ENCODE measurements at regions of chr12 and their contacts with region 1.

Region 1: GRCh38 chr12:128259556-128260070 is 7.4 kb upstream of the TMEM132C start:
- DNase-seq: peak; percentile 65
- H3K4me3 ChIP-seq: no peak overlapping the region
- H3K27ac ChIP-seq: no peak overlapping the region
- H3K4me1 ChIP-seq: no peaks in the 10 kb centered on the region
- H3K27me3 ChIP-seq: peaks cover 6% of the 10 kb centered on the region
- CTCF ChIP-seq: peak; percentile 82

Region 2: GRCh38 chr12:127363392-127363791 is 896.2 kb before region 1 on chr12:
- CTCF ChIA-PET with region 1: no interaction called
- POLR2A ChIA-PET with region 1: no interaction called
- intact Hi-C with region 1: no loop called
- DNase-seq: peak; percentile 74
- H3K4me3 ChIP-seq: no peak overlapping the region
- H3K27ac ChIP-seq: no peak overlapping the region
- H3K4me1 ChIP-seq: no peaks in the 10 kb centered on the region
- H3K27me3 ChIP-seq: no peaks in the 10 kb centered on the region
- CTCF ChIP-seq: peak; percentile 67

Region 3: GRCh38 chr12:127677537-127678131 is 582.0 kb before region 1 on chr12:
- CTCF ChIA-PET with region 1: no interaction called
- POLR2A ChIA-PET with region 1: no interaction called
- intact Hi-C with region 1: no loop called
- DNase-seq: peak; percentile 83
- H3K4me3 ChIP-seq: no peak overlapping the region
- H3K27ac ChIP-seq: no peak overlapping the region
- H3K4me1 ChIP-seq: no peaks in the 10 kb centered on the region
- H3K27me3 ChIP-seq: no peaks in the 10 kb centered on the region
- CTCF ChIP-seq: peak; percentile 91

Region 4: DNA sequence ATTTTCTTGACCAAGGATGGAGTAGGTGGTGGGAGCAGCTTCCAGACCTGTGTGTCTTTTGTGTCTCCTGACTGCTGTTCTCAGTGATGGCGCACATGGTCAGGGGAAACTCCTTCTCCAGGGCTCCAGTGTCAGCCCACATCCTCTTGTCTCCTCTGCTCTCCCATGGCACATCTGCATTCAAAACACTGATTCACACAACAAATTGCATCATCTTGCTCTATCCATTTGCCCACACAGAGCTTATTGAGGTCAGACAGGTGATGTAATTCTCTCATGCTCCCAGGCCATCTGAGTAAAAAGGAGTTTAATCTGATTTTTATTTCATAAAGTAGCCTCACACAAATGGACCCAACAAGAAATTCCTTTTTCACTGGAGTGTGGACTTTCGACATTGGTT is 14.5 kb before region 1 on chr12:
- CTCF ChIA-PET with region 1: interaction called, 12 read pairs
- POLR2A ChIA-PET with region 1: no interaction called
- intact Hi-C with region 1: no loop called
- DNase-seq: no peak
- H3K4me3 ChIP-seq: no peak overlapping the region
- H3K27ac ChIP-seq: no peak overlapping the region
- H3K4me1 ChIP-seq: no peaks in the 10 kb centered on the region
- H3K27me3 ChIP-seq: no peaks in the 10 kb centered on the region
- CTCF ChIP-seq: no peak

Region 5: DNA sequence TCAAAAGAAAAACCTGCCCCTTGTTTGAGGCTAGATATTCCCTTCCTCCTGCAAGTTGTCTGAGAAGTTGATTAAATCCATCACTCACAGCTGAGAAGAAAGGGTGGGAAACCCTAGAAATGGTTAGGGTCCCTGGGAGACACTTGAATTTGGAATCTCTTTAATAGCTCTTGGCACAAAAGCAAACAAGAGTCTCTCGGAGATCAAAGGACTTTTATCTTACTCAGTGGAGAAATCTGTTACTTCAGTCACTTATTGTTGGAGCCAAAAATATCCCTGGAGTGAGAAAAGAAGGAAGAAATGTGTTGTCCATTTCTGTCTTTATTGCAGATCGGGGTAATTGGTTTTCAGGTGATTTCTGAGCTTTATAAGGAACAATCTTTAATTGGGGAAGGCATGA is 54.3 kb after region 1 on chr12:
- CTCF ChIA-PET with region 1: no interaction called
- POLR2A ChIA-PET with region 1: no interaction called
- intact Hi-C with region 1: no loop called
- DNase-seq: no peak
- H3K4me3 ChIP-seq: no peak overlapping the region
- H3K27ac ChIP-seq: no peak overlapping the region
- H3K4me1 ChIP-seq: no peaks in the 10 kb centered on the region
- H3K27me3 ChIP-seq: peaks cover 3% of the 10 kb centered on the region
- CTCF ChIP-seq: no peak

Region 6: GRCh38 chr12:128537668-128538067 is 278.1 kb after region 1 on chr12:
- CTCF ChIA-PET with region 1: interaction called, 15 read pairs
- POLR2A ChIA-PET with region 1: no interaction called
- intact Hi-C with region 1: no loop called
- DNase-seq: no peak
- H3K4me3 ChIP-seq: no peak overlapping the region
- H3K27ac ChIP-seq: no peak overlapping the region
- H3K4me1 ChIP-seq: no peaks in the 10 kb centered on the region
- H3K27me3 ChIP-seq: peaks cover 15% of the 10 kb centered on the region
- CTCF ChIP-seq: no peak

Region 7: DNA sequence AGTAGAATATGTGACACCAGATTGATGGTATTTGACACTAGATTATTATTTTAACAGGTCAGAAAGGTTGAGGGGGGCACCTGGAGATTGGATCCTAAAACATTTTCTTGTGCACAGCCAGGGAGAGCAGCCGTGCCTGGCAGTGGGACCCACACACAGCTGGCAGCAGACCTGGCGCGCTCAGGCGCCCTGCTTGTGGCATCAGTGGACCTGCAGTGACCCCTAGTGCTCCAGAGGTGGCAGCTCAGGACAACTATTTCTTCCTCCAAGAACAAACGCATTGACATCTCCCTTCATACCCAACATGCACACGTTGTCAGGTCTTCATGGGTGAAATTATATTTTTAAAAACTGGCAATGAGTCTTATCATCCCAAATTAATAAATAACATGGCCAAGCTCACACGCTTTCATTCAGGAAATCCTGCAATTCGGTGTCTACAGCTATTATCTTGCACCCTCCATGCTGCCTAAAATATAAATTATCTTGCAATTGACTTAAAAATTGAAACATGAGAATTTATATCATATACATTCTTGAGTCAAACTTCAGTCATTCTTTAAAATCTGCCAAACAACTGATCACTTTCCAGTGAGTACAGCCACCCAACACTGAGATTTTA is 1651.9 kb after region 1 on chr12:
- CTCF ChIA-PET with region 1: interaction called, 4 read pairs
- POLR2A ChIA-PET with region 1: no interaction called
- intact Hi-C with region 1: loop called (anchors 2 kb)
- DNase-seq: peak; percentile 45
- H3K4me3 ChIP-seq: no peak overlapping the region
- H3K27ac ChIP-seq: no peak overlapping the region
- H3K4me1 ChIP-seq: no peaks in the 10 kb centered on the region
- H3K27me3 ChIP-seq: no peaks in the 10 kb centered on the region
- CTCF ChIP-seq: peak; percentile 59

Region 8: DNA sequence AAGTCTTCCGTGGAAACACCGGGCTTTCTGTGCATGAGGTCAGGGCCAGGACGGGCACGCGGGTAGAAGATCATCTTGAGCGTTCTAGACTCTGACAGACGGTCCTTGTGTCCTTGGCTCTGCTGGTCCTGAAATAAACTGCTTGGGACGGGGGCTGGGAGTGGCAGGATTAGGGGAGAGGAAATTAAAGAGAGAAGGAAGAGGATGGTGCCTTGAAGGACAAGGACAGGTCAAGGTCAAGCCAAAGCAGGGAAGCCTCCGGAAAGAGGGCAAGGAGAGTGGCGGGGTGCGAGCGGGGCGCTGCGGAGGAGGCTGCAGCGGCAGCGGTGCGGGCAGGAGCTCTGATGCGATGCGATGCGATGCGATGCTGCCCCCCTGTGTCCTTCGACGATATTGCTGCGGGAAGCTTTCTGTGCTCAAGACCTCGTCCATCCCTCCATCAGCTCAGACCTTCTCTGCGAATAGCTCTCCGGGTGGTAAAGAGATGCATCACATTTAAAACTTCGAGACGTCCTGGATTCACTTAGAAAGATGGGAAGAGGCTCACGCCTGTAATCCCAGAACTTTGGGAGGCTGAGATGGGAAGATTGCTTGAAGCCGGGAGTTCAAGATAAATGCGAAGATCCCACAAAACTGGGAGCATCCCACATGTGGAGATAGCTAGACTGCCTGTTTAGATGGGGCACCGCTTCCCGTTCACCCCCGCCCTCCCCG is 1754.3 kb after region 1 on chr12:
- CTCF ChIA-PET with region 1: interaction called, 13 read pairs
- POLR2A ChIA-PET with region 1: no interaction called
- intact Hi-C with region 1: loop called (anchors 2 kb)
- DNase-seq: peak; percentile 67
- H3K4me3 ChIP-seq: no peak overlapping the region
- H3K27ac ChIP-seq: no peak overlapping the region
- H3K4me1 ChIP-seq: no peaks in the 10 kb centered on the region
- H3K27me3 ChIP-seq: peaks cover 63% of the 10 kb centered on the region
- CTCF ChIP-seq: peak; percentile 68